Breast epithelium (tissue), 4 donors: ENCODE measurements at regions of chr6 and their contacts with region 1.

Region 1: DNA sequence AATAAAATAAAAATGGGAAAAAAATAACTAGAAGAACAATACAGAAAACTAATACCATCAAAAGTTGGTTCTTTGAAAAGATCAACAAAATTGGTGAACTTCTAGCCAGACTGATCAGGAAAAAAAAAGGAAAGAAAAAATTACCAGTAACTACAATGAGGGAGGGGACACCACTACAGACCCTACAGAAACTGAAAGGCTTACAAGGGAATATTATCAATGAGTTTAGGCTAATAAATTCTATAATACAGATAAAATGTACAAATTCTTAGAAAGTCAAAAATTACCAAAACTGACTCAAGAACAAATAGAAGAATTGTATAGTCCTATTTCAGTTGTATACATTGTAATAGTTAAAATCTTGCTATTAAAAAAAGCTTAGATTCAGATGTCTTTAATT is 141.8 kb downstream of the COL19A1 start:
- DNase-seq: no peak
- H3K4me3 ChIP-seq: no peak overlapping the region
- H3K27ac ChIP-seq: no peak overlapping the region
- H3K4me1 ChIP-seq: no peaks in the 10 kb centered on the region
- H3K27me3 ChIP-seq: no peaks in the 10 kb centered on the region
- CTCF ChIP-seq: no peak
- POLR2A ChIP-seq: no peak

Region 2: DNA sequence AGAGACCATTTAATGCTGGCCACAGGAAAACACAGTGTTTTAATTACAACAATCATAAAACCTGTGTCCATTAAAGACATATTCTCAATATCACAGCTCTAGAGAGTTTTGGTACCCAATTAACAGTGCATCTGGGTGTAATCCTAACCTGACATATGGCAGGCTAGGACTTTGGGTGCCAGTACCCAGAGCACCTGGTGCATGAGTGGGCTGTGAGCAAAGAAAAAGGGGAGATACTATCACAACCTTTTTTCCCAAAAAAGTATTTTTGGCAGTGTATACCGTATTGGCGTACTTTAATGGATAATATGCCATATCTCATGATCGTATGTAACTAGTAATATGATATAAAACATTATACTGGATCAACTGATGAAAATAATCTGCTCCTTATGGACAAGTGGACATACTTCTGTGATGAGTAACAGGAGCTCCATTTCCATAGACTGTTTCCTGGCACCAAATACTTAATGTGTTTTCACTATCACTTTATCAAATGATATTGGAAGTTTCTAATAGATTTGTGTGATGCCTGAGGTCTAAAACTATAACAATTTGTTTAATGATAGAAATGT is 50.1 kb before region 1 on chr6:
- intact Hi-C with region 1: loop called (anchors 5 kb)
- DNase-seq: no peak
- H3K4me3 ChIP-seq: no peak overlapping the region
- H3K27ac ChIP-seq: no peak overlapping the region
- H3K4me1 ChIP-seq: no peaks in the 10 kb centered on the region
- H3K27me3 ChIP-seq: no peaks in the 10 kb centered on the region
- CTCF ChIP-seq: no peak
- POLR2A ChIP-seq: no peak

Region 3: DNA sequence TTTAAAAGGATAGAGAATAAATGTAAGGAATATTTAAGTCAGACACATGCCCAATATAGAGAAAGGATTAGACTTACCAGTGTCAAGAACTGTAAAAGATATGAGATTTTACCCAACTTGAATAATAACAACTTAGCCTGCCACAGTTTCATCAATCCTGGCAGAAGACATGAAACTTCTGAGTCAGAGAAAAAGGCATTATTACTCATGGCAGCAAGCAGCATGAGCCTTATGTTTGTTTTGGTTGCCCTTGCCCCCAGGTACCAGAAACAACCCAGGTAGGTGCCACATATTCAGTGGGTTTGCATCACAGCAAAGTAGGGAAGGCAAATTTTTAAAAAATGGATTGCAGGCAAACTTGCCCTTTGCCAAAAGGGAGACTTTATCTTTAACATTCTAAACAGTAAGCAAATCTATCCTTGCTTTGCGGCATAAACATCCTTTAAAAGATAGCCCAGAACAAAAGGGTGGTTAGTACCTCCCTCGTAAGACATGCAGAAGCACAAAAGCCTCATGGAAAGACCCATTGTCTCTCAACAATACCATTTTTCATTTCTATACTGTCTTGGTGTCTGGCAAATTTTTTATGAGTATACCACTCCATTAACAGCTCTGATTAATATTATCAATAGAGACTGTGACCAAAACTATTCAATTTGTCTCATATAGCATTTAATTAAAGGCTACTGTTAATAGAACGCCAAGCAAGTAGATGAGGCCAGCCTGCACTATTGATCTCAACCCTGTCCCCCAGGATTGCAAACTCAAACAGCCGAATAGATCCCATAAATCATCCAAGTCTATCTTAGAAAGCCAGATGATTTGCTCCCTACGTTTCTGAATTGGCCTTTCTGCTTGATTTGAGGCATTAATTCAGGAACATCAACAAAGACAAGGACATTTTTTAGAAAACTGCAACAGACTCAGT is 43.3 kb after region 1 on chr6:
- intact Hi-C with region 1: no loop called
- DNase-seq: no peak
- H3K4me3 ChIP-seq: no peak overlapping the region
- H3K27ac ChIP-seq: no peak overlapping the region
- H3K4me1 ChIP-seq: no peaks in the 10 kb centered on the region
- H3K27me3 ChIP-seq: no peaks in the 10 kb centered on the region
- CTCF ChIP-seq: no peak
- POLR2A ChIP-seq: no peak